Colonic mucosa (tissue), 4 donors: ENCODE measurements at regions of chr1 and their contacts with region 1.

Region 1: DNA sequence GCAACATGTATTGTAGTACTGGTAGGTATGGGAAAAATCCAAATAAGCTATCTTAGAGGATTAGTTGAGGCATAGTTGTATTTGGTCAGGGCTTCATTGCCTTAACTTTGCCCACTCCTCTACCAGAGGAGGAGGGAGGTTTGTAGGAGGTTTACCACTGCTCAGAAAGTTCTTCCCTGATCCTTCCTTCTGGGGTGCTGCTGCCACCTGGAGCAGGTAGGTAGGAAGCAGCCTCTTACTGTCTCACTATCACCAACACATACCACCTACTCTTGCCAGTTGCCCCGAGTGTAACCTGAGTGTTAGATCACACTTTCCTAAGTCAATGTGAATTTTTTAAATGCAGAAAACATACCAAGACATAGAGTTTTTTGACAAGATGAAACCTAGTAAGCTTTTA is 24.1 kb upstream of the ZSWIM5 start:
- DNase-seq: peak; percentile 36
- H3K4me3 ChIP-seq: no peak overlapping the region
- H3K27ac ChIP-seq: no peak overlapping the region
- H3K4me1 ChIP-seq: no peaks in the 10 kb centered on the region
- H3K27me3 ChIP-seq: no peaks in the 10 kb centered on the region
- CTCF ChIP-seq: peak; percentile 26

Region 2: DNA sequence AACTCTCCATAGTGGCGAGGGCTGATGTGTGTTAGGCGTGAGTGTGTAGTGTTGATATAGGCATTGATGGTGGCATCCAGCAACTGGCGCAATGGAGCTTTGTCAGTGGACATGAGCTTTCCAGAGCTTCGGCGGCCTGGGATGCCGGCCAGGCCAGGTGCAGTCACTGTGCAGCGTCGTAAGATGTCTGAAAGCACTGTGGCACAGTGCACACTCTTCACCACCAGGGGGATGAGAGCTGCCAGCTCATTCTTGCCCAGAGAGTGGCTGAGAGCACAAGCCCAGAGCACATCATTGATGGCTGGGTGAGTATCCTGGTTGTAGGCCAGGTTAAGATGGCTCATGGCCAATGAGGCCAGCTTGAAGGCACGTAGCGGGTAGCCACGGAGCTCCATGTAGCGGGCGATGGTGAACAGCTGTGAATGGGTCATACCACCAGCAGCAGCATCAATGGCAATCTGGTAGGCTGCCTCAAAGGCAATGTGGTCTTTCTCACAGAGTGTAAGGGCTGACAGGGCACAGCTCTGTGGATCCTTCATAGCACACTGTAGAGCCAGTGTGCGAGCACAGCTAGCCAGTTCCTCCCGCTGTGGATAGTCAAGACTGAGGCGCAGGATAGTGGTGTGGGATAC is 211.8 kb before region 1 on chr1:
- intact Hi-C with region 1: loop called (anchors 5 kb)
- DNase-seq: peak; percentile 71
- H3K4me3 ChIP-seq: no peak overlapping the region
- H3K27ac ChIP-seq: no peak overlapping the region
- H3K4me1 ChIP-seq: no peaks in the 10 kb centered on the region
- H3K27me3 ChIP-seq: no peaks in the 10 kb centered on the region
- CTCF ChIP-seq: peak; percentile 79